ENCODE measurements at regions of chr15 and their contacts with region 1.

Region 1: DNA sequence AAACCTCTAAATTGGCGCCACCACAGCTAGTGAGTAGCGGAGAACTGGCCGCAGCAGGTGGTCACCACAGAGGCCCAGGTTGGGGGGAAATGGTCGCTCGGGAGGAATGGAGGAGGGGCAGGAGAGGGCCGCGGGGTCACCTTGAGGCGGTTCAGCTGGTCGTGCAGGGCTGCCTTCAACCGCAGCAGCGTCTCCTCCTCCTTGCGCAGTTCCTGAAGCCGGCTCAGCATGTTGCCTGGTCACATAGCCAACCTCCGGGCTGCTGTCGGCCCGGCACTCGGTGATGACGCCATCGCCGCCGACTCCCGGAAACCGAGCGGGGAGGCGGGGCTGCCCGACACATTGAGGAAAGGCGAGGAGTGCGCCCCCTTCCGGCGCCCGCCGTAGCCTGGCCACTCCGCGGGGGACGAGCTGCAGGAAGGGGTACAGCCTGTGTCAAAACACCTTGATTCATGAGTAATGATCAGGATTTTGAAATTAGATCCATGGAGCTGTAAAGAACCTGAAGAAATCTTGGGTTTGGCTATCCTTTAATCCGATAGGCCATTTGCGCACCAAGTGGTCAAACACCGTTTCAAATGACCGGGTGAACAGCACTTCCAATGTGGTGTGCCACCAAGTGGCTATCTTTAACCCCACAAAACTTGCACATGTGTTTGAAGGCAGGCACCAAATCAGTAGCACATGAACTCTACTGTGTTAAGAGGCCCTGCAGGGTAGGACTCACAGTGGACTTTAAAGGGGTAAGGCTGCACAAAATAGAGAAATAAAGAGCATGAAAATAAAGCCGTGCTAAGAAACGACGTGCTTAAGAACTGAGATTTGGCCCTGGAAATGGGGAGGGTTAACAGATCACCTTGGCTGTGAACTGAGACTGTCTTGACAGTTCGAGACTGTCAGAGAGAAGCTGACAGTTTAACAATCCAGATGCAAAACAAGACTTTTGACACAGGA is at the start of gene SNAPC5:
- DNase-seq: peak; percentile 97 to 98
- H3K4me3 ChIP-seq: peak within 1 kb of the TSS; percentile 15 to 96 (median 86)
- H3K27ac ChIP-seq: peak within 1 kb of the TSS; percentile 45 to 69 (median 62)
- H3K4me1 ChIP-seq: peaks cover 12% of the 10 kb centered on the region in 2 donors
- H3K27me3 ChIP-seq: no peaks in the 10 kb centered on the region
- CTCF ChIP-seq: peak; percentile 91 to 98 (median 96)
- POLR2A ChIP-seq: peak in 1 of 2 donors; percentile 77
- total RNA-seq, gene SNAPC5: 26.3 to 79.2 (median 40.5) TPM

Region 2: GRCh38 chr15:66386204-66387123 is 111.3 kb before region 1 on chr15 and contains the start of gene MAP2K1:
- intact Hi-C with region 1: loop called (anchors 2 kb)
- DNase-seq: peak; percentile 98 to 99
- H3K4me3 ChIP-seq: peak within 1 kb of the TSS; percentile 4 to 86 (median 74)
- H3K27ac ChIP-seq: peak within 1 kb of the TSS; percentile 66 to 95 (median 87)
- H3K4me1 ChIP-seq: peaks cover 14 to 21% of the 10 kb centered on the region in 2 donors
- H3K27me3 ChIP-seq: no peaks in the 10 kb centered on the region
- CTCF ChIP-seq: peak in 5 of 6 experiments; percentile 55 to 79 (median 75)
- POLR2A ChIP-seq: peak in 1 of 2 donors; percentile 89
- total RNA-seq, gene MAP2K1: 18.1 to 25.4 (median 25.3) TPM